Activated CD8-positive, alpha-beta T cell treated with anti-CD3 and anti-CD28 coated beads for 36 hours (primary cell): ENCODE measurements at regions of chr1 and their contacts with region 1.

Region 1: DNA sequence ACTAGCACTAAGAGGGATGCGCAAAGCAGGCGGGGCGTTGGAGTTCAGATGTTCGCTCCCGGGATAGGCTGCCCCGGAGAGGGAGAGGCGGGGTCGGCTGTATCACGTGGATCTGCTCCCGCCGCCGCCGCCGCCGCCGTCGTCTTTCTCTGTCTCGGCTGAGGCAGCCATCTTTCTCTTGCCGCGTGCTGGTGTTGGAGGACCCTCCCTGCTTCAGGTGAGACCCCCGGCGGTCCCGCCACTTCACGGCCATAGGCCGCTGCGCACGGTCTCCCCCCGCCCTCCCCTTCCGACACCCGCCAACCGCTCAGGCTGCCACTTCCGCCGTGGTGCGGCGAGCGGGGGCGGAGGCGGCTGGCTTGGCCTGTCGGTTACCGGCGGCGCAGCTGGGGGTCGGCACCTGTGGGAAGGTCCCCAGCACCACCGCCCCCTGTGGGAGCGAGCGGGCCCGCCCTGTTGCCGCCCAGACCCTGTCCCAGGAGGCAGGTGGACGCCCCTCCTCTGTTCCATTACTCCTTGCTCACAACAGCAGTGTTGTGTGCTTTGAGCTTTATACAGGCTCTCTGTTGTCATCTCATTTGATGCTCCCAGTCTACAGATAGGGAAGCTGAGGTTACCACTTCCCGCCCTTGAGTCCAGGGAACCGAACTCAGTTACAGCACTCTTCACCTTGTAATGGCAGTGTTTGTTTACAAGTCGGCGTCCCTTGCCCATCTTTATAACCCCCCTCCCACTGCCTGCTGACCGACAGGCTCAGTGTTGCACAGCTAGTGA is at the start of gene BTF3L4:
- DNase-seq: peak; percentile 98
- ATAC-seq: peak; percentile 93
- H3K4me3 Mint-ChIP-seq: peak within 1 kb of the TSS; percentile 86
- H3K27ac Mint-ChIP-seq: peak within 1 kb of the TSS; percentile 98
- H3K4me1 Mint-ChIP-seq: peaks cover 39% of the 10 kb centered on the region
- H3K27me3 Mint-ChIP-seq: no peaks in the 10 kb centered on the region
- CTCF ChIP-seq: no peak
- total RNA-seq, gene BTF3L4: 30.0 to 33.1 TPM

Region 2: GRCh38 chr1:52033190-52034049 is 22.9 kb before region 1 on chr1 and contains the start of gene KTI12:
- CTCF ChIA-PET with region 1: interaction called, 4 read pairs
- POLR2A ChIA-PET with region 1: interaction called, 24 read pairs
- intact Hi-C with region 1: no loop called
- DNase-seq: peak; percentile 93
- ATAC-seq: peak; percentile 96
- H3K4me3 Mint-ChIP-seq: peak within 1 kb of the TSS; percentile 91
- H3K27ac Mint-ChIP-seq: peak within 1 kb of the TSS; percentile 94
- H3K4me1 Mint-ChIP-seq: peaks cover 27% of the 10 kb centered on the region
- H3K27me3 Mint-ChIP-seq: no peaks in the 10 kb centered on the region
- CTCF ChIP-seq: no peak
- total RNA-seq, gene KTI12: 13.4 to 14.0 TPM

Region 3: GRCh38 chr1:52111492-52111891 is 55.1 kb after region 1 on chr1:
- CTCF ChIA-PET with region 1: no interaction called
- POLR2A ChIA-PET with region 1: no interaction called
- intact Hi-C with region 1: no loop called
- DNase-seq: no peak
- ATAC-seq: no peak
- H3K4me3 Mint-ChIP-seq: no peak overlapping the region
- H3K27ac Mint-ChIP-seq: no peak overlapping the region
- H3K4me1 Mint-ChIP-seq: no peaks in the 10 kb centered on the region
- H3K27me3 Mint-ChIP-seq: no peaks in the 10 kb centered on the region
- CTCF ChIP-seq: no peak

Region 4: GRCh38 chr1:52225174-52225573 is 168.8 kb after region 1 on chr1:
- CTCF ChIA-PET with region 1: no interaction called
- POLR2A ChIA-PET with region 1: no interaction called
- intact Hi-C with region 1: no loop called
- DNase-seq: no peak
- ATAC-seq: no peak
- H3K4me3 Mint-ChIP-seq: no peak overlapping the region
- H3K27ac Mint-ChIP-seq: no peak overlapping the region
- H3K4me1 Mint-ChIP-seq: peaks cover 2% of the 10 kb centered on the region
- H3K27me3 Mint-ChIP-seq: no peaks in the 10 kb centered on the region
- CTCF ChIP-seq: no peak